Caco-2 (cell line): ENCODE measurements at regions of chr1 and their contacts with region 1.

Region 1: DNA sequence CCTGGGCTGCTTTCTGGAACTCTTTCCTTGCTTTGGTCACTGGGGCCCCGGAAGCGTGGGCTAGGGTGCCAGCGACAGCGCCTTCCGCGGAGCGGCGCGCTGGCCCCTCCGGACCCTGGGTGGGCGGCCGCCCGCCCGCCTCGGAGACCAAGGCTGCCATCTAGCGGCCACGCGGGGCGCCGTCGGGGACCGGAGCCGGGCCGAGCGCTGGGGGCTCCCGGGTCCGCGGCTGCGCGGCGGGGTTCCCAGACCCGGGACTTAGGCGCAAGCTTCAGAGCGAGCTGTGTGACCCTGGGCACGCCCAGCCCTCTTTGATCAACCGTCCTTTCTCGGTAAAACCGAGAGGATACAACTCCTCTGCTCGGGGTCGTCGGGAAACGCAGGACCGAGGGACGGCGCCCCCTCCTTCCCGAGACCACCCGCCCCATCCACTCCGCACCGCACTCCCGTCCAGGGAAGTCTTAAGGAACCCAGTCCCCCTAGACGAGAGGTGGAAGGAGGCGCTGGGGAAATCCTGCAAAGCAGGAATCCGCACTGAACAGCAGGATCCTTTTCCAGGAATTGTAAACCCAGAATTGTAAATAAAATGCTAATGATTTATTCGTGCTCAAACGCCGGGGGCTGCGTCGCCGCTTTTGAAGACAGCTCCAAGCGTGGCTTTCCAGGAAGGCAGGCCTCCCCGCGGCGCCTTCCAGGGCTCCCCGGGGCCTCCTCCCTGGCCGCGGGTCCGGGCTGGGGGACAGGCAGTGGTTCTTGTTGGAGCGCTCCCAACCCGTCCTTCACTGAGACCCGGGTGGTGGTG is 41.2 kb downstream of the RRAGC start:
- DNase-seq: peak in 1 of 2 experiments; percentile 55
- H3K4me3 ChIP-seq: peak overlapping the region; percentile 27
- H3K4me3 Mint-ChIP-seq: no peak overlapping the region
- H3K27ac Mint-ChIP-seq: no peak overlapping the region
- H3K4me1 ChIP-seq: no peaks in the 10 kb centered on the region
- H3K4me1 Mint-ChIP-seq: no peaks in the 10 kb centered on the region
- H3K27me3 ChIP-seq: no peaks in the 10 kb centered on the region
- H3K27me3 Mint-ChIP-seq: peaks cover 9% of the 10 kb centered on the region
- CTCF ChIP-seq: peak; percentile 24 to 58

Region 2: GRCh38 chr1:38741341-38741740 is 77.0 kb before region 1 on chr1:
- CTCF ChIA-PET with region 1: no interaction called
- POLR2A ChIA-PET with region 1: no interaction called
- intact Hi-C with region 1: no loop called
- DNase-seq: peak; percentile 9 to 54
- H3K4me3 ChIP-seq: no peak overlapping the region
- H3K4me3 Mint-ChIP-seq: no peak overlapping the region
- H3K27ac Mint-ChIP-seq: no peak overlapping the region
- H3K4me1 ChIP-seq: no peaks in the 10 kb centered on the region
- H3K4me1 Mint-ChIP-seq: no peaks in the 10 kb centered on the region
- H3K27me3 ChIP-seq: no peaks in the 10 kb centered on the region
- H3K27me3 Mint-ChIP-seq: no peaks in the 10 kb centered on the region
- CTCF ChIP-seq: no peak

Region 3: DNA sequence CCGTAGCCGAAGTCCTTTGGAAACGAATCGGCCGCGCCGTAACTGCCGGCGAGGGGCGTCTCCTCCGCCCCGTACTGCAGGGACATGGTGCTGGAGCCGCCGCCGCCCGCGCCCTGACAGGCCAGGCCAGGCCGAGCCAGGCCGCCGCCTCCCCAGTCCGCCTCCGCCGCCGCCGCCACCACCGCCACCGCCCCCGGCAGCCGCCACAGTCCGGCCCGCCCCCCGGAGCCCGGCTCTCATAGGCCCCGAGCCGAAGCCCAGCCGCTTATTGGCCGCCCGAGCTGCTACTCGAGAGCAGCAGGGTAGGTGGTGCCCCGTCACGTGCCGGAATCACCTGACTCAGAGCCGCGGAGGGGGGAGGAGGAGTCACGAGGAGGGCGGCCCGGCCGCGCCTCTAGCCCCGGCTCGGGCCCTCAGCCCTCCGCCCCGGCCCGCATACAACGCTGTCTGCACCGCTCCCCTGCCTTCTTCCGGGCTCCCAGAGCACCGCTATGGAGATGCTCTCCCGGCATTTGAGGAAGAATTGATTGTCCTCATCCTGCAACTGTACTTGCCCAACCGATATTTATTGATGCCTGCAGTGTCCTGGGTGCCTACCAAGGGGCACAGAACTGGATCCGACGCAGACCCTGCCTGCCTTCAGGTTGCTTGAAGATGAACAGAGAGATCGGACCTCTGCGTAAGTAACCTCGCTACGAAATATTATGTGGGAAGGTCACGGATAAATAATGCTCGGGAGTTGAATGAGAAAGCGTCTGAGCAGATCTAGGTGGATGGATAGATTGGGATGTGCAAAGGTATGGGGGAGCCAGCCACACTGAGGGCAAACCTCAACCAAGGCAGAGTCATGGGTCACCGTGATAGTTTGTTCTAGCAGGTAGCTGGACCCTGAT is 41.4 kb after region 1 on chr1 and contains the start of gene RRAGC:
- CTCF ChIA-PET with region 1: no interaction called
- POLR2A ChIA-PET with region 1: no interaction called
- intact Hi-C with region 1: loop called (anchors 1 kb)
- DNase-seq: peak; percentile 97 to 98
- H3K4me3 ChIP-seq: peak within 1 kb of the TSS; percentile 62
- H3K4me3 Mint-ChIP-seq: peak within 1 kb of the TSS; percentile 98
- H3K27ac Mint-ChIP-seq: peak within 1 kb of the TSS; percentile 92
- H3K4me1 ChIP-seq: peaks cover 5% of the 10 kb centered on the region; the same call in 1 of the 2 replicates
- H3K4me1 Mint-ChIP-seq: no peaks in the 10 kb centered on the region
- H3K27me3 ChIP-seq: no peaks in the 10 kb centered on the region
- H3K27me3 Mint-ChIP-seq: no peaks in the 10 kb centered on the region
- CTCF ChIP-seq: no peak
- total RNA-seq, gene RRAGC: 15.3 and 16.0 TPM in 2 replicates